ENCODE measurements at regions of chr1 and their contacts with region 1.

Region 1: GRCh38 chr1:61210435-61211154 is 128.2 kb downstream of the NFIA start:
- DNase-seq: no peak
- H3K4me3 ChIP-seq: no peak overlapping the region
- H3K27ac ChIP-seq: no peak overlapping the region
- H3K4me1 ChIP-seq: peaks cover 18% of the 10 kb centered on the region
- H3K27me3 ChIP-seq: no peaks in the 10 kb centered on the region
- CTCF ChIP-seq: no peak
- POLR2A ChIP-seq: no peak

Region 2: GRCh38 chr1:60978421-60979357 is 231.9 kb before region 1 on chr1:
- intact Hi-C with region 1: loop called (anchors 10 kb)
- DNase-seq: no peak
- H3K4me3 ChIP-seq: no peak overlapping the region
- H3K27ac ChIP-seq: no peak overlapping the region
- H3K4me1 ChIP-seq: no peaks in the 10 kb centered on the region
- H3K27me3 ChIP-seq: no peaks in the 10 kb centered on the region
- CTCF ChIP-seq: peak in 1 of 3 experiments; percentile 22
- POLR2A ChIP-seq: no peak